GM10248 (cell line): ENCODE measurements at regions of chr19 and their contacts with region 1.

Region 1: DNA sequence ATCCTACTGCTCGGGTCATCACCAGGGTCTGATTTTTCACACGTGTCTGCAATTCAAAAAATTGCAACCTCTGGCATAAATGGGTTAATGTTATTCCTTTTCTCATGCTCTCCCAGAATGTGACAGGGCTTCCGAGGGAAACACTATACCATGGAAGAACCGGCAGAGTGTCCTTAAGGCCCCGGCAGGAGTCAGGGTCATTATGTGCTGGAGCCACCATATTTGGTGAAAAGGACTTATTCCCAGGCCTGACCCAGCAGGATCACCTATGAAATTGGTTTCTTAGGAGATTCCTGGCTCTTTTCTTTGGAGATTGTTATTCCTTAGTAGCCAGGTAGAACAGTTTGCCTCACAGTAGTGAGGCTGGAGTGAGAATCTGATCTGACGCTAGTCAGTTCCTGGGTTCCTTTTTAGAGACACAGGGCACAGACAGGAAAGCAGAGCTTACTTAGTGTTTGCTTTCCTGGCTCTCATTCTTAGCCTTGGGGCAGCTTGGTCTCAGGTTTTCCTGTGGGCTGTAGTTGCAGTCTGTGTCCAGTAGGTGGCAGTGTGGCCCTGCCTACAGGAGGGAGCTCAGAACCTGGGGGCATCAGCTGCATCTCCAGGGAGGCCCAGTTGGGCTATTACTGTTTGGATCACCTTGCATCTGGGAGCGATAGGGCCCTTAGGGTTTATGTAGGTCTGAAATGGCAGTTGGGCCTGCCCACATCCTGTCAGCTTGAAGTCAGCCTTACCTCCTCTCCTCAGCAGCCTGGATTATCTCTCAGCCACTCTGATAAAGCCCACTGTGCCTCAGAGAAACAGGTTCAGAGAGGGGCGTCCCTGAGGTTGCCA is 12.4 kb downstream of the SNRNP70 start:
- DNase-seq: peak; percentile 82
- CTCF ChIP-seq: peak; percentile 97

Region 2: GRCh38 chr19:48858984-48859710 is 238.5 kb before region 1 on chr19:
- CTCF ChIA-PET with region 1: no interaction called
- POLR2A ChIA-PET with region 1: no interaction called
- DNase-seq: peak; percentile 85
- CTCF ChIP-seq: no peak

Region 3: DNA sequence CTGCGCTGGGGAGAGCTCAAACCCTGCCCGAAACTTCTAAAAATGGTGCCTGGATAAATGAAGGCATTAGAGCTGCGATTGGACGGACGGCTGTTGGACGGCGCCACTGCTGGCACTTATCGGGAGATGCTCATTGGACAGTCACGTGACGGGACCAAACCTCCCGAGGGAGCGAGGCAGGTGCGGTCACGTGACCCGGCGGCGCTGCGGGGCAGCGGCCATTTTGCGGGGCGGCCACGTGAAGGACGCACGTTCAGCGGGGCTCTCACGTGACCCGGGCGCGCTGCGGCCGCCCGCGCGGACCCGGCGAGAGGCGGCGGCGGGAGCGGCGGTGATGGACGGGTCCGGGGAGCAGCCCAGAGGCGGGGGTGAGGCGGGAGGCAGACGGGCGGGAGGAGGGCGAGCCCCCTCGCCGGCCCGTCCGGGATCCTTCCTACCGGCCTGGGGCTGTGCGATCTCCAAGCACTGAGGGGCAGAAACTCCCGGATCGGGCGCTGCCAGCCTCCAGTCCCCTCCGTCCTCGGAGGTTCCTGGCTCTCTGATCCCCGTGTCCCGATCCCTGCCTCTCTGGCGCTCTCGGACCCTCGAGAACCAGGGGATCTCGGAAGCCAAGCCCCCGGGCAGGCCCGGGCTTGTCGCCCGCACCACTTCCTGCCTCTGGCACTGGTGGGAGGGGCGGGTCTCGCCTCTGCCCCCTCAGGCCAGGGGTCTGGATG is 142.9 kb before region 1 on chr19 and contains the start of gene BAX:
- CTCF ChIA-PET with region 1: no interaction called
- POLR2A ChIA-PET with region 1: no interaction called
- DNase-seq: peak; percentile 98
- CTCF ChIP-seq: no peak

Region 4: GRCh38 chr19:49064768-49065611 is 32.7 kb before region 1 on chr19 and contains the start of gene NTF4:
- CTCF ChIA-PET with region 1: interaction called, 13 read pairs
- POLR2A ChIA-PET with region 1: no interaction called
- DNase-seq: no peak
- CTCF ChIP-seq: no peak

Region 5: DNA sequence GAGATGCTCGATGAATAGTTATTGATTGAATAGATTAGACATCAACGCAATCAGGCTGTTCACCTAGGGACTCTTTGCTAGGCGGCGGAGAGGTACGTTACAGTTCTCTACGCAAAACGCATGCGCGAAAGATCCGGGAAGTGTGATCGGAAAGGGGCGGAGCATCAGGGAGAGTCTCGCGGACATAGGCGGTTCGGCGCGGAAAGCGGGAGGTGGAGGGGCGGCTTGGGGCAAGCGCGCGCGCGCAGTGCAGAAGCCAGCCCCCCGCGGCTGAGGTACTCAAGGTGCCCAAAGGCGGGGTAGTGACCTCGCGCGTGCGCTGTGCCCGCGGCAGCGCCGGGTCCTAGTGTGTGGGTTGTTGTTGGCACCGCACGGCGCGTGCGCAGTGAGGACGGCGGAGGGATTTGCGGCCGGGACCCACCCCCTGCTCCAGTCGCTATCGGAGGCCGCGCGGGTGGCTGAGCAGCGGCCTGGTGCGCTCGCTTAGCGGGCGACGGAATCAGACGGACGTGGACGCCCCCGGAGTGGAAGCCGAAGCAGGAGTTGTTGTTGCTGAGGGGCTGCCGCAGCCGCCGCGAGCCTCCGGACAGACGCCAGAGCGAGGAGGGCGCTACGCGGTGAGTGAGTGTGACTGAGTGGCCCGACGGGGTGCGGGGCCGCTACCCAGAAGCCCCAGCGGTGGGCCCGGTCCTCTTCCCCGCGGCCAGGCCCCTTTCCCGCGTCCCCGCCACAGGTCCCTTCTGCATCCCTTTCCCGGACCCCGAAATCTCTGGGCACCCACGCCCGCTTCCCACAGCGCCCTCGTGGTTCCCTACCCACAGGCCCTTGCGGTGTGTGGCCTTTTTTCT is 12.4 kb before region 1 on chr19 and contains the start of gene SNRNP70:
- CTCF ChIA-PET with region 1: interaction called, 30 read pairs
- POLR2A ChIA-PET with region 1: interaction called, 3 read pairs
- DNase-seq: peak; percentile 99
- CTCF ChIP-seq: no peak

Region 6: GRCh38 chr19:49127674-49128544 is 30.2 kb after region 1 on chr19:
- CTCF ChIA-PET with region 1: interaction called, 18 read pairs
- POLR2A ChIA-PET with region 1: interaction called, 6 read pairs
- DNase-seq: peak; percentile 99
- CTCF ChIP-seq: no peak

Region 7: GRCh38 chr19:49148784-49149651 is 51.3 kb after region 1 on chr19:
- CTCF ChIA-PET with region 1: interaction called, 30 read pairs
- POLR2A ChIA-PET with region 1: interaction called, 3 read pairs
- DNase-seq: peak; percentile 86
- CTCF ChIP-seq: no peak

Region 8: GRCh38 chr19:49200238-49200862 is 102.7 kb after region 1 on chr19:
- CTCF ChIA-PET with region 1: interaction called, 81 read pairs
- POLR2A ChIA-PET with region 1: no interaction called
- DNase-seq: no peak
- CTCF ChIP-seq: no peak